ENCODE measurements at regions of chr22 and their contacts with region 1.

Region 1: DNA sequence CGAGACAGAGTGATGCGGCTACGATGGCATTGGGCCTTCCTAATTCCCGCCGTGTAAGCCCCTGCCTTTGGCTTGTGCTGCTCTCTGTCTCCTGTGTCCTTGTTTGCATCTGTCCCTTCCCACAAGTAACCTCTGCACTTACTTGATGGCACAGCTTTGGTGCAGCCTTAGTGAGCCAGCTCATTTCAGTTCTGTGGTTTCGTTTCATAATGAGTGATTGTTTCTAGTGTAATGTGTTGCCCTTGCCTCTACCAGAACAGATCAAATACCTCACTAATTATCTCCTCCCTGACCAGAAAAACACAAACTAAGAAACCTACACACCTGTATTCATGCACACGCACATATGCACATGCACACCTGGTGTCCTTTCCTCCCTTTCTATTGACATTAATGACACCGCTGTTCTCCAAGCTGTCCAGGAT is 58.8 kb downstream of the GRK3 start:
- DNase-seq: no peak
- ATAC-seq: peak; percentile 57
- H3K4me3 Mint-ChIP-seq: no peak overlapping the region
- H3K27ac Mint-ChIP-seq: peak overlapping the region; percentile 68
- H3K4me1 Mint-ChIP-seq: peaks cover 55% of the 10 kb centered on the region
- H3K27me3 Mint-ChIP-seq: no peaks in the 10 kb centered on the region
- CTCF ChIP-seq: no peak

Region 2: GRCh38 chr22:25465949-25466348 is 157.4 kb before region 1 on chr22:
- CTCF ChIA-PET with region 1: no interaction called
- POLR2A ChIA-PET with region 1: no interaction called
- intact Hi-C with region 1: no loop called
- DNase-seq: no peak
- ATAC-seq: no peak
- H3K4me3 Mint-ChIP-seq: no peak overlapping the region
- H3K27ac Mint-ChIP-seq: no peak overlapping the region
- H3K4me1 Mint-ChIP-seq: no peaks in the 10 kb centered on the region
- H3K27me3 Mint-ChIP-seq: no peaks in the 10 kb centered on the region
- CTCF ChIP-seq: no peak

Region 3: GRCh38 chr22:25572708-25573171 is 50.6 kb before region 1 on chr22:
- CTCF ChIA-PET with region 1: interaction called, 3 read pairs
- POLR2A ChIA-PET with region 1: no interaction called
- intact Hi-C with region 1: loop called (anchors 5 kb)
- DNase-seq: no peak
- ATAC-seq: peak; percentile 63
- H3K4me3 Mint-ChIP-seq: peak overlapping the region; percentile 36
- H3K27ac Mint-ChIP-seq: peak overlapping the region; percentile 82
- H3K4me1 Mint-ChIP-seq: peaks cover 79% of the 10 kb centered on the region
- H3K27me3 Mint-ChIP-seq: no peaks in the 10 kb centered on the region
- CTCF ChIP-seq: no peak

Region 4: GRCh38 chr22:25644122-25644521 is 20.8 kb after region 1 on chr22:
- CTCF ChIA-PET with region 1: interaction called, 3 read pairs
- POLR2A ChIA-PET with region 1: no interaction called
- intact Hi-C with region 1: loop called (anchors 2 kb)
- DNase-seq: no peak
- ATAC-seq: no peak
- H3K4me3 Mint-ChIP-seq: peak overlapping the region; percentile 21
- H3K27ac Mint-ChIP-seq: peak overlapping the region; percentile 81
- H3K4me1 Mint-ChIP-seq: peaks cover 63% of the 10 kb centered on the region
- H3K27me3 Mint-ChIP-seq: no peaks in the 10 kb centered on the region
- CTCF ChIP-seq: no peak

Region 5: GRCh38 chr22:25656724-25657123 is 33.4 kb after region 1 on chr22:
- CTCF ChIA-PET with region 1: no interaction called
- POLR2A ChIA-PET with region 1: no interaction called
- intact Hi-C with region 1: loop called (anchors 1 kb)
- DNase-seq: peak; percentile 23
- ATAC-seq: peak; percentile 99
- H3K4me3 Mint-ChIP-seq: peak overlapping the region; percentile 42
- H3K27ac Mint-ChIP-seq: peak overlapping the region; percentile 72
- H3K4me1 Mint-ChIP-seq: peaks cover 81% of the 10 kb centered on the region
- H3K27me3 Mint-ChIP-seq: no peaks in the 10 kb centered on the region
- CTCF ChIP-seq: no peak

Region 6: DNA sequence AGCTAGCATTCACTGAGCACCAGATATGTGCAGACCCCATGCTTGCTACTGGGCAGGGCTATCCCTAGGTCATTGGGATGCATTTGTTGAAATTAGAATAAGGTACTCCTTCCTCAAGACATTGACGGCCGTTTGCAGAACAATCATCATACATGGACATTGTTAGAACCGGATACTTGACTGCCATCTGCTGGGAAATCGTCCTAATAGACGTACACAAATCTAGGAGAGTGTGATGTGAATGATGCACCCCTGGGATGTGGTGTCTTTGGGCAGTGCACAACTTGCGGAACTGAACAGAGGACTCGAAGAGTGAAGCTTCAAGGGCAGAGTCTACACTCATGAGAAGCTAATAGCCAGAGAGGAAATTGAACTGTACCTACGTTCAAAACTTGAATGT is 154.5 kb after region 1 on chr22:
- CTCF ChIA-PET with region 1: no interaction called
- POLR2A ChIA-PET with region 1: no interaction called
- intact Hi-C with region 1: loop called (anchors 5 kb)
- DNase-seq: no peak
- ATAC-seq: no peak
- H3K4me3 Mint-ChIP-seq: no peak overlapping the region
- H3K27ac Mint-ChIP-seq: no peak overlapping the region
- H3K4me1 Mint-ChIP-seq: peaks cover 3% of the 10 kb centered on the region
- H3K27me3 Mint-ChIP-seq: peaks cover 6% of the 10 kb centered on the region
- CTCF ChIP-seq: no peak

Region 7: DNA sequence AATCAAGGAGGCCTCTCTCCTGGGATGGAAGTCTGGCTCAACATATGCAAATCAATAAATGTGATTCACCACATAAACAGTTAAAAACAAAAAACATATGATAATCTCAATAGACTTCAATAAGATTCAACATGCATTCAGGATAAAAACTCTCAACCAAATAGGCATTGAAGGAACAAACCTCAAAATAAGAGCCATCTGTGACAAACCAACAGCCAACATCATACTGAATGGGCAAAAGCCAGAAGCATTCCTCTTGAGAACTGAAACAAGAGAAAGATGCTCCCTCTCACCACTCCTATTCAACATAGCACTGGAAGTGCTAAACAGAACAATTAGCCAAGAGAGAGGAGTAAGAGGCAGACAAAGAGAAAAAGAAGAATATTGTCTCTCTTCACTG is 491.9 kb after region 1 on chr22:
- CTCF ChIA-PET with region 1: no interaction called
- POLR2A ChIA-PET with region 1: no interaction called
- intact Hi-C with region 1: no loop called
- DNase-seq: no peak
- ATAC-seq: no peak
- H3K4me3 Mint-ChIP-seq: no peak overlapping the region
- H3K27ac Mint-ChIP-seq: no peak overlapping the region
- H3K4me1 Mint-ChIP-seq: no peaks in the 10 kb centered on the region
- H3K27me3 Mint-ChIP-seq: peaks cover 53% of the 10 kb centered on the region
- CTCF ChIP-seq: no peak